Ascending aorta (tissue), 2 donors: ENCODE measurements at regions of chr16 and their contacts with region 1.

Region 1: GRCh38 chr16:68528686-68529379 is 10.3 kb upstream of the ZFP90 start:
- DNase-seq: peak; percentile 33 to 88
- H3K4me3 ChIP-seq: peak overlapping the region in 1 of 2 donors; percentile 73
- H3K27ac ChIP-seq: no peak overlapping the region
- H3K4me1 ChIP-seq: peaks cover 3 to 12% of the 10 kb centered on the region in 2 donors
- H3K27me3 ChIP-seq: no peaks in the 10 kb centered on the region
- CTCF ChIP-seq: peak; percentile 88 to 91 (median 90)

Region 2: GRCh38 chr16:68575082-68575481 is 46.2 kb after region 1 on chr16:
- intact Hi-C with region 1: no loop called
- DNase-seq: no peak
- H3K4me3 ChIP-seq: no peak overlapping the region
- H3K27ac ChIP-seq: no peak overlapping the region
- H3K4me1 ChIP-seq: no peaks in the 10 kb centered on the region
- H3K27me3 ChIP-seq: no peaks in the 10 kb centered on the region
- CTCF ChIP-seq: no peak

Region 3: DNA sequence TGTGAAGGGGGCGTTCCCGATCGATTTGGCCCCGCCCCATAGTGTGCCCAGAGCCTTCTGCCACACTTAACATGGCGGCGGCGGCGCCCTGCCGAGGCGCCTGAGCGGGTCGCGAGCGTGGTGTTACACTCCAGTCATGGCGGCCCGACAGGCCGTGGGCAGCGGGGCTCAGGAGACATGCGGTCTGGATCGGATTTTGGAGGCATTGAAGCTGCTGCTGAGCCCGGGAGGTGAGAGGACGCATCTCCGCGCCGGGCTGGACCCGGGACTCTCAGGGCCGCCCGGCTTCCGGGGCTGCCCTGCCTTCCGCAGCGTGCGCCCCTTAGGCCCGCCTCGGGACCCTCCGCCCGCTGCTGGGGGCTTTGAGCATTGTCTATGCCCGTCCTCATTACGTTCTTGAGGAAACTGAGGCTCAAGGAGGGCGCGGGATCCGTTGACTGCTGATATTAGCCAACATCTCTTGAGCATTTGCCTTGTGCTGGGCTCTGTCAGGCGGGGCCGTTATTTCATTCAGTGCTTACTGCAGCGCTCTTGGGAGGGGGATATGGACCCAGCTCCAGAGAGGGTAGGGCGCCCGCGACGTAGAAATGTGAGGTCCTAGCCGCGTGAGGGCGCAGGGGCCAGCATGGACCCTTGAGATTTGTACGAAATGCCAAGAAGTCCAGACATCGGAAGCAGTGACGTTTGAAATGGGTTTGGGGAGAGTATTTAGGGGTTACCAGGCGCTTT is 314.8 kb after region 1 on chr16 and contains the start of gene TANGO6:
- intact Hi-C with region 1: loop called (anchors 2 kb)
- DNase-seq: peak; percentile 40 to 91
- H3K4me3 ChIP-seq: peak within 1 kb of the TSS; percentile 85 to 97
- H3K27ac ChIP-seq: peak within 1 kb of the TSS; percentile 87 to 94
- H3K4me1 ChIP-seq: no peaks in the 10 kb centered on the region
- H3K27me3 ChIP-seq: no peaks in the 10 kb centered on the region
- CTCF ChIP-seq: no peak
- total RNA-seq, gene TANGO6: 3.7 TPM